Activated naive CD4-positive, alpha-beta T cell treated with anti-CD3 and anti-CD28 coated beads for 36 hours (primary cell): ENCODE measurements at regions of chr1 and their contacts with region 1.

Region 1: DNA sequence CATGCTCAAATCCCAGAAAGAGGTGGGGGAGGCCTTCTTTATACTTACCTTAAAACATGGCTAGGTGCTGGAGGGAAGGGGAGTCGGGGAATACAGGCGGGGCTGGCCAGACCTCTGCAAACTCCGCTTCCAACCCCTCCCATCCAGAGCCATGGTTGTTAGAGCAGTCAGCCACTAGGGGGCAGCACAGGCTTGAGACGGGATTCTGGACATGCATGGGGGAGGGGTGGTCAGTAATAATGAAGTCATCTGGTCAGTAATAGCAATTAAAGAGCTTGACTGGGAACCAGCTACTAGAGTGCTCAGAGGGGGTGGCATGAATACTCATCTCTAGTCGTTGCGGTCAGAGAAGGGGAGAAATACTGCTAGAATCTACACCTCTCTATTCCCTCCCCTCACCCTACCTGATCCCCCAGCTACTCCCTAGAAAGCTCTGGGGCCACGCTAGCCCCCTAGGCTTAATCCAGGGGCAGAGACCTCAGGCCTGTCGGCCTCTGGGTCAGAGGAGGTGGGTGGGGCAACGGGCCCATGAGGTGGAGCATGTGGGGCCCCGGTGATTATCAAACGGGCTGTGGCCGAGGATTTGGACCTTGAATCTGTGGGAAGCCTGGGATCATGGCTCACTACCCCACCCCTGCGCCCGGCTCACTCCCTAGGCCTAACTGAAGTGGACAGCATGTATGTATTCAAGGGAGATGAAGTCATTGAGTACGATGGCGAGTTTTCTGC is 2.9 kb downstream of the CASQ1 start:
- DNase-seq: peak; percentile 91
- H3K4me3 Mint-ChIP-seq: no peak overlapping the region
- H3K27ac Mint-ChIP-seq: no peak overlapping the region
- H3K4me1 Mint-ChIP-seq: no peaks in the 10 kb centered on the region
- H3K27me3 Mint-ChIP-seq: no peaks in the 10 kb centered on the region

Region 2: GRCh38 chr1:160205242-160206035 is 12.2 kb after region 1 on chr1 and contains the start of gene PEA15:
- CTCF ChIA-PET with region 1: interaction called, 19 read pairs
- intact Hi-C with region 1: loop called (anchors 1 kb)
- DNase-seq: peak; percentile 79
- H3K4me3 Mint-ChIP-seq: peak within 1 kb of the TSS; percentile 85
- H3K27ac Mint-ChIP-seq: peak within 1 kb of the TSS; percentile 87
- H3K4me1 Mint-ChIP-seq: peaks cover 46% of the 10 kb centered on the region
- H3K27me3 Mint-ChIP-seq: no peaks in the 10 kb centered on the region
- total RNA-seq, gene PEA15: 34.3 to 42.0 TPM

Region 3: GRCh38 chr1:160219062-160219929 is 26.0 kb after region 1 on chr1:
- CTCF ChIA-PET with region 1: interaction called, 19 read pairs
- intact Hi-C with region 1: no loop called
- DNase-seq: no peak
- H3K4me3 Mint-ChIP-seq: no peak overlapping the region
- H3K27ac Mint-ChIP-seq: no peak overlapping the region
- H3K4me1 Mint-ChIP-seq: no peaks in the 10 kb centered on the region
- H3K27me3 Mint-ChIP-seq: no peaks in the 10 kb centered on the region

Region 4: DNA sequence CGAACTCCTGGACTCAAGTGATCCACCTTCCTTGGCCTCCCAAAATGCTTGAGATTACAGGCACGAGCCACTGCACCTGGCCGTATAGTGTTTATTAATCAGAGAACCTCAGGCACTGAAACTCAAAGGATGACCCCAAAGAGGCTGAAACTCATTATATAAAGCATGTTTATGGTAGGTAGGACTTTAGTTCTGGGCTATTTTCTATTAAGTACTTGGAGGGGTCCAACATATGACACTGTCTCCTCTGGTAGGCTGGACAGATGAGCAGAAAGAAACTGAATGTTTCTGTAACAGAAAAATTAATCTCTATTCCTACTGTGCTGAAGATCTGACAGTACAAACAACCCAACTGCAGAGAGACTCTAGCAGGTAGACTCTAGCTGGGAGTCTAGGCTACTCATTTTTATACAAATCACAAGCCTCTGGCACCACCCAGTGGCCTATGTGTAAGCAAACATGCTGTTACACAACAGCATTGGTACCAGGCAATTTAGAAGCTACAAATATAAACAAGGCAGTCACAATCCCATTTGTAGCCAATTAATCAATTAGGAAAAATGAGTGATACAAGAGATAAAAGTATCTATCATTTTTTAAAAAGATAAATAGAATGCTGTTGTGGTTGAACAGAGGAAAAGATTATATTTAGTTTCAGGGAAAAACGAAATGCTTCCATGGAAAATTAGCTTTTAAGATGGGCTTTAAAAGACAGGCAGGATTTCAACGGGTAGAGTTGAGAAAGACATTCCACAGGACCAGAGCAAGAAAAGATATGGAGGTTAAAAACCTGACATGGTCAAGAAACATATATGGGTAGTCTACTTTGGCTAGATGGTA is 58.7 kb after region 1 on chr1:
- CTCF ChIA-PET with region 1: interaction called, 30 read pairs
- intact Hi-C with region 1: loop called (anchors 1 kb)
- DNase-seq: peak; percentile 73
- H3K4me3 Mint-ChIP-seq: no peak overlapping the region
- H3K27ac Mint-ChIP-seq: no peak overlapping the region
- H3K4me1 Mint-ChIP-seq: peaks cover 22% of the 10 kb centered on the region
- H3K27me3 Mint-ChIP-seq: no peaks in the 10 kb centered on the region

Region 5: DNA sequence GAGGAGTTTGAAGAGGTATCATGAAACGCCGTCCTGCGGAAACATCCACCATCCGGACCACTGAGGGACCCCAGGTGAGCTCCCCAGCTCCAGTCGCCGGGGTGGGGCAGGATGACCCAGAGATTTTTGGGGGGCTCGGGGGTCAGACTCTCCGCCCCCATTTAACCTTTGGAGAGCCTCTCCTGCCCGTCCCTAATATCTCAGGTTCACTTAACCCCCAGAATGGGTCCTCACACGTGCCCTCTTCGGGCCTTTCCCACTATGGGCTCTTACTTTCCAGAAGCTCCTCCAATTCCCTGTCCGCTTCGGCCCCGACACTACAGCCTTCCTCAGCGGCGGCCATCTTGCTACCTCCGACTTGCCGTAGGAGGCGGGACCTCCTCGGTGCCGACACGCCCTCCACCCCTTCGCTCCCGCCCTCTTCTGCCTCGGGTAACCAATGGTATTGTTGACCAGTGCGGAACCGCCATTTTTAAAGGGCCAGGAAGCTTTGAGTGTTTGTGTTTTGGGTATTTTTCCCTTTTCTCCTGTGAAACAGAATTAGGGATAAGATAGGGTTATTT is 91.6 kb after region 1 on chr1 and contains the start of gene PEX19:
- CTCF ChIA-PET with region 1: interaction called, 139 read pairs
- intact Hi-C with region 1: no loop called
- DNase-seq: peak; percentile 97
- H3K4me3 Mint-ChIP-seq: peak within 1 kb of the TSS; percentile 98
- H3K27ac Mint-ChIP-seq: peak within 1 kb of the TSS; percentile 87
- H3K4me1 Mint-ChIP-seq: peaks cover 18% of the 10 kb centered on the region
- H3K27me3 Mint-ChIP-seq: no peaks in the 10 kb centered on the region
- total RNA-seq, gene PEX19: 58.3 to 65.4 TPM

Region 6: DNA sequence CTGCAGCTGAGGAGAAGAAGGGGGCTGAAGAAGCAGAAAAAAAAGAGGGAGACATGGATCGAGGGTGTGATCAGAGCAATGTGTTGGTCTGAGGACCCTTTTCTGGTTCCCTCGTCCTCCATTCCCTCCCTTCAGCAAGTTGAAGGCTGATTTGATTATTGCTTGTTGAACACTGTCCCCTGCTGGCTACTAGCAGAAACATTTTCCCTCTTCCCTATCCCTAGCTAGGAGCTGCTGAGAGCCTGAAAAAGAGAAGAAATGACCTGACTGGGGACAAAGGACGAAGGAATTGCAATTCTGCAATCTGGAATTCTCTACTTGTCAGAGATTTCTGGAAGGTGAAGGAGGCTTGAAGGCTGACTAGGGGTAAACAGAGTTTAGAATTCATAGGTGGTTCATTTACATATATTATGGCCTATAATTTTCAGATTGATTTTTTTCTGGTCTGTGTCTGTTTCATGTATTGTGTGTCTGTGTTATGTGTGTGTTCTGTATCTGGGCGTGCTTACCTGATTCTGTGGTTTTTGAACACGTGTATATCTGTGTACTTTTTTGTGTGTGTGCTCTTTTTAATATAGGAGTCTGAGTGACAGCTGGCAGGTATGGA is 183.4 kb after region 1 on chr1:
- CTCF ChIA-PET with region 1: interaction called, 13 read pairs
- intact Hi-C with region 1: loop called (anchors 1 kb)
- DNase-seq: peak; percentile 55
- H3K4me3 Mint-ChIP-seq: no peak overlapping the region
- H3K27ac Mint-ChIP-seq: no peak overlapping the region
- H3K4me1 Mint-ChIP-seq: peaks cover 13% of the 10 kb centered on the region
- H3K27me3 Mint-ChIP-seq: no peaks in the 10 kb centered on the region

Region 7: DNA sequence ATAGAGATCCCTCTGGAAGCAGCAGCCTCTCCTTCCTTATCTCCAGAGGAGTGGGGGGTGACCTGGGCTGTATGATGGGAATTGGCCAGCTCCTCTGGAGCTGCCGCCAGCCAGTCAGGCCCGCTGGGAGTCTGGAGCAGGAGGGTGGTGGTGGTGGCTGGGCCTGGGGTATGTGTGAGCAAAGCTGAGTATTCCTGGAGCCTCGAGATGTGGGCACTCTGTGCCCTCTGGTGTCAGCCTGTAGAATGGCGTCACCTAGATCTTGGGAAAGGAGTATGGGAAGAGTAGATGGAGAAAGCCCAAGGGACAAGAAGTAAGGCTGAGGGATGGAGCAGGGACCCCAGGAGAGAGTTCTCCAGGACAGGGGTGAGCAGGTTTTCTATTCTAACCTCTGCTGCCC is 223.1 kb after region 1 on chr1:
- CTCF ChIA-PET with region 1: interaction called, 3 read pairs
- intact Hi-C with region 1: loop called (anchors 2 kb)
- DNase-seq: no peak
- H3K4me3 Mint-ChIP-seq: no peak overlapping the region
- H3K27ac Mint-ChIP-seq: no peak overlapping the region
- H3K4me1 Mint-ChIP-seq: no peaks in the 10 kb centered on the region
- H3K27me3 Mint-ChIP-seq: no peaks in the 10 kb centered on the region